Right ventricle myocardium superior (tissue), 1 donor: ENCODE measurements at regions of chr18 and their contacts with region 1.

Region 1: DNA sequence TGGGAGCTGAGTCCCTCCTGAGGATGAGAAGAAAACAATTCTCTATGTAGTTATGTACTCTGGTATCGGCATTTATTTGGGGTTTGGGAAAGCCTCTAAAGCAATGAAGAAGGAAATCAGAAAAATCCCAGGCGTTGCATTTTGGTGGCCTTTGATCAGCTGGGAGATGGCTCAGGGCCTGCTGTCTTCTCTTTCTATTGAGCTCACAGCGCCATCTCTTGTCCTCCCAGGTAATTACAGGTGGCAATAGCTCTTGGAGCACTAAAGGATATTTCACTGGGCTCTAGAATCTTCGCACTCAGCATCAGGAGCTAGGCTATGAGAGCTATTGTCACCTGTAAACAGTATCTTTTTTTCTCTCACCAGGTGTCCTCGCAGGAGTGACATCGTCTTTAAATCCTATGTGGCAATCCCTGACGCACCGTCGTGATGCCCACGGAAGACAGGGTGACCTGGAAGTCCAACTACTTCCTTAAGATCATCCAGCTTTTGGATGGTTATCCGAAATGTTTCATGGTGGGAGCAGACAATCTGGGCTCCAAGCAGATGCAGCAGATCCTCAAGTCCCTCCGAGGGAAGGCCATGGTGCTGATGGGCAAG is 76.1 kb upstream of the PMAIP1 start:
- DNase-seq: no peak
- ATAC-seq: peak; percentile 95

Region 2: DNA sequence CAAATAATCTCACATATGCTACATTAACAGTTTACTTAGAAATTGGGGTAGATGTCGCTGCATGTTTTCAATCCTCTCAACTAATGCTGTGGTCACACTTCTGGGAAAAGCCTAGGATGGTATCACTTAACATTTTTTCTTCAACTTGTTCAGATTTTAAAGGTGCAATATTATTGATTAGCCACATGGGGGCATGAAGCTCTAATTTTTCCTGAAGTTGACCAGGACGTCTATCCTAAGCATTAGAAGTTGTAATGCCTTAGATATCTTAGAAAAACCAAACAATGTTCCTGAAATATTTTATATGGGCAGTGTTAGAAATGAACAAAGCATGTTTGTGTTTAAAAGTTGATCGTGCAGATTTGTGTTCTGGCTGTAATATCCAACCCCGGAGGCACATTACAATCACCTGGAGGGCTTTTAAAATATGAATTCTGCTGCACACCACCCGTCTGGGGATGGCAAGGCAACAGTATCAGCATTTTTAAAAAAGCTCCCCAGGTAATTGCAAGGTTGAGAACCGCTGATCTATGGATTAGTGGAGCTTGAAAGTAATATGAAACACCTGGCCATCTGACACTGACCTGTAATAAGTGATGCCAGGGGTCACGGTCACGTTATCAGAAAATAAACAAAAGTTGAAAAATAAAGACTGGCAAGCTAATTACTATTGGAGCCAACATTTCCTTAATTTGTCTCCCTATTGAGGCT is 364.2 kb before region 1 on chr18:
- intact Hi-C with region 1: loop called (anchors 5 kb)
- DNase-seq: no peak
- ATAC-seq: peak; percentile 68

Region 3: DNA sequence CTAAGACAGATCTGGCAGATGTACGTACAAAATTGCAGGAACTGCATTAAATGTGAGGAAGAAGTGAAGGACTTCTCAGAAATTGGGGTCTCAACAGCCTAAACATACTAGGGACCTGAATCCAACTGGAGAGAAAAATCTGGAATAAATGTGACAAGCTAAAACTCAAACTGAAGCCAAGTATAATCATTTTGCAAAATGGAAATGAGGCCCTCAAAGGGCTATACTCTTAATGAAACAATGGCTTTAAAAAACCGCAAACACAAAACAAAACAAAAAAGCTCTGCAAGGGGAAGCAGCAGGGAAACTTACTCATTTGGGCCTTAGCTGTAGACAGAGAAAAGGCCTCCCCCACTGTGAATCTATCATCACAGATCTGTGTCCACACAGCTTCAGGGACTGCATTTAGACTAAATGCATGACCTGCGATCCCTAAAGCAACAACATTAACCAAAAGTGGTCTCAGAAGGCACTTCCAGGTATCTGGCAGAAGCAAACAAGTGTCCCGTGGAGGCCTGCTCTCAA is 189.7 kb before region 1 on chr18:
- intact Hi-C with region 1: loop called (anchors 2 kb)
- DNase-seq: no peak
- ATAC-seq: no peak

Region 4: GRCh38 chr18:60003610-60004185 is 180.0 kb after region 1 on chr18:
- intact Hi-C with region 1: no loop called
- DNase-seq: no peak
- ATAC-seq: no peak